Mammary epithelial cell (primary cell): ENCODE measurements at regions of chr2 and their contacts with region 1.

Region 1: DNA sequence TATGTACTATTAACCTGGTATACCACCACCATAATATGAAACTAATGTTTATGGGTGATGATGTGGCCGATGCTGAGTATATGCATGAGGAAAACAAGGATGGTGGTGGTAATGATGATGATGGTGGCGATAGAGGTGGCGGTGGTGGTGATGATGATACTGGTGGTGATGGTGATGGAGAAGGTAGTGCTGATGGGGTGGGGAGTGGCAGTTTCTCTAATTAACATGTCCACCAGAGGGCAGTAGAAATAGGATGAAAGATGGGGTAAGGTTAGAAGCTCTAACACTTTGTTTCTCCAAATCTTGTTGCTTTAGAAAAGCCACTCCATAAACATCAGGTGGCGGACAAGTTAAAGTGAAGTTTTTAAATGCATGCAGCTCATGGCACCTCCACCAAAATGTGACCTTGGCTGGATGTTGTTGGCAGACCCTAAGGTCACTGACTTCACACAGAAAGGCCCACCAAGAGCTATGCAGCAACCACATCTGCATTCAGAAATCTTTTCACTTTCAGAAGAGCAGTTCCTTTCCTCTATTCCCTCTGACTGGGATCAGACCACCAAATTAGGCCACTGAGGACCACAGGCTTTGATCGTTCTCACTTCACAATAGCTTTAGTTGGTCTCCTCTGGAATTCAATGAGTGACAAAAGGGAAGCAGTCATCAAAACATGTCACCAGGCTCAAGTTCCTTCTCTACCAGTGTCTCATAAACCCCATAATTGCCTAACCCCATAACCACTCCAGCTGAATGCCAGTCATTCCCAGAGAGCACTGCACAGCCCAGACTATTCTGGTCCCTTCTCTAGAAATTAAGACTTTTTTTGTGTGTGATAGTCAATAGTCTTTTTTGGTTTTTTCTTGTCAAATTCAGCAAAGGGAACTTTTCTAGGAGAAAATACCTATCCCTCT is 7.5 kb upstream of the BCL11A start:
- DNase-seq: peak; percentile 35
- H3K4me3 ChIP-seq: no peak overlapping the region
- H3K27ac ChIP-seq: no peak overlapping the region
- H3K4me1 ChIP-seq: no peaks in the 10 kb centered on the region
- H3K27me3 ChIP-seq: no peaks in the 10 kb centered on the region
- CTCF ChIP-seq: peak; percentile 41 to 58

Region 2: GRCh38 chr2:60581433-60582282 is 20.7 kb after region 1 on chr2:
- CTCF ChIA-PET with region 1: interaction called, 4 read pairs
- dilution Hi-C with region 1: no loop called
- in situ Hi-C with region 1: no loop called
- intact Hi-C with region 1: loop called (anchors 1 kb)
- DNase-seq: peak; percentile 37
- H3K4me3 ChIP-seq: peak overlapping the region; percentile 23 to 45 (median 45)
- H3K27ac ChIP-seq: no peak overlapping the region
- H3K4me1 ChIP-seq: peaks cover 20% of the 10 kb centered on the region
- H3K27me3 ChIP-seq: no peaks in the 10 kb centered on the region
- CTCF ChIP-seq: peak; percentile 84 to 93

Region 3: DNA sequence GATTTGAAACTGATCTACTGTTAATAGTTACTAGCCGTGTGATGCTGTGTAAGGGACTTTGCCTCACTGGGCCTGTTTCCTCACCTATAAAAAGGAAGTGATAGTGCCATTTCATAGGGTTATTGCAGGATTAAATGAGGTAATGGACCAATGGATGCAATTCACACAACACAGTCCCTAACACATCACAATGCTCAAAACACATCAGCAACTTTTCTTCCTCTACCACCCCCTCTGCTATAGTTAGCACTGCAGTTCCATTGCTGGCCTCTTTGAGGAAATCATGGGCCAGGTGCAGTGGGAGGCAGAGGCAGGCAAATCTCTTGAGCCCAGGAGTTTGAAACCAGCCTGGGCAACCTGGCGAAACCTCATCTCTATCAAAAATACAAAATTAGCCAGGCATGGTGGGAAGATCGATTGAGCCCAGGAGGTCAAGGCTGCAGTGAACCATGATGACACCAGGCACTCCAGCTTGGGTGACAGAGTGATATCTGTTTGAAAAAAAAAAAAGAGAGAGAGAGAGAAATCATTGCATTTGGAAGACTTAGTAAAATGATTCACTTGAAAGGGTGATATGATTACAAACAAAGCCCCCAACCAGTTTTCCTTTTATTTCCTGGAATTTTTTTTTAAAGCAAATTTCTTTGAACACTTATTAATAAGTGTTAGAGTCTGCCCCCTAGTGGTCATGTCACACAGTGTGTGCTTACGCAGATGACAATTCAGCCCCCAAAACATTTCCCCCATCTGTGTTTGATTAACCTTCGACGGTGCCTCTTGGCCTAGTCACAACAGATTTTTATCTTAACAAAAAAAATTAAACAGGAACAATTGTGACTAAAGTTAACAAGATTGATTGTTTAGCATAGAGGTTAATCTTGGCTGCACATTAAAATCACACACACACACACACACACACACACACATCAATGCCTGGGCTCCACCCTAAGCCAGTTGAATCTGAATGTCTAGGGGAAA is 81.1 kb after region 1 on chr2:
- CTCF ChIA-PET with region 1: no interaction called
- dilution Hi-C with region 1: no loop called
- in situ Hi-C with region 1: no loop called
- intact Hi-C with region 1: loop called (anchors 1 kb)
- DNase-seq: peak; percentile 7
- H3K4me3 ChIP-seq: no peak overlapping the region
- H3K27ac ChIP-seq: no peak overlapping the region
- H3K4me1 ChIP-seq: no peaks in the 10 kb centered on the region
- H3K27me3 ChIP-seq: no peaks in the 10 kb centered on the region
- CTCF ChIP-seq: peak; percentile 75

Region 4: GRCh38 chr2:60674524-60675165 is 113.7 kb after region 1 on chr2:
- CTCF ChIA-PET with region 1: interaction called, 3 read pairs
- dilution Hi-C with region 1: no loop called
- in situ Hi-C with region 1: no loop called
- intact Hi-C with region 1: loop called (anchors 1 kb)
- DNase-seq: peak; percentile 53
- H3K4me3 ChIP-seq: no peak overlapping the region
- H3K27ac ChIP-seq: no peak overlapping the region
- H3K4me1 ChIP-seq: no peaks in the 10 kb centered on the region
- H3K27me3 ChIP-seq: no peaks in the 10 kb centered on the region
- CTCF ChIP-seq: peak; percentile 93 to 97